PC-9 (cell line): ENCODE measurements at regions of chr11 and their contacts with region 1.

Region 1: GRCh38 chr11:68839054-68839865 is 2.5 kb downstream of the CPT1A start:
- DNase-seq: peak; percentile 88 to 98
- H3K4me3 ChIP-seq: peak overlapping the region; percentile 56
- H3K27ac ChIP-seq: peak overlapping the region; percentile 88
- H3K4me1 ChIP-seq: peaks cover 35% of the 10 kb centered on the region
- H3K27me3 ChIP-seq: no peaks in the 10 kb centered on the region
- CTCF ChIP-seq: no peak

Region 2: DNA sequence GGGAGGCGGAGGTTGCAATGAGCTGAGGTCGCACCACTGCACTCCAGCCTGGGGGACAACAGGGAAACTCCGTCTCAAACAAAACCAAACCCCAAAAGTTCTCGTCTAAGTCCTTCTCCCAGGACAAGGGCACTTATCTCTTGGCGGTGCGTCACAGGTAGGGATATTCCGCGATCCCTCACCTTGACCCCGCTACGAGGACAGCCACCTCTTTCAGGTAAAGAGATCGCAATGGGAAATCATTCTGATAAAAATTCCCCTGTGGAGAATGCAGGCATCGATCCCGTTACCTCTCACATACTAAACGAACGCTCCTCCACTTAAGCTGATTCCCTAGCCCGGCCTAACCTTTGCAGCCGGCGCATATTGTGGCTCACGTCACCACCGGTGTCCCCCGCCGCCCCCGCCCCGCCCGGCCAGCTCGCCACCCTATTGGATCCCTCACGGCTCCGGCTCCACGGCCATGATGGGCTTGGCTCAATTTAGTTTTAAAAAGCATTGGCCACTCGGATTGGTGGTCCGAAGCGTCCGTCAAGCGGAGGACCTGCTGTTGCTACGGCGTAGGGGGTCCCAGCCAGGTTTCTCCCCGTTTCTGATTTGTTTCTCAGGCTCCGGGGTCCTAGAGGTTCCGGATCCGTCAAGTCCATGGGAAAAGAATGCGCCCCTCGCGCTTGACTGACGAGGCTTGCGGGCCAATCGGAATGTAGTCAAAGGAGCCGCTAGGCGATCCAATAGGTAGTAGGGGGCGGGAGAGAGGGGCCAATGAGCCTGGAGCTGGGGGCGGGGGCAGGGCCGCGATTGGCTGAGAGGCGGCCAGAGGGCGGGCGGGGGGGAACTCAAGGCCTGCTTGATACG is 379.1 kb before region 1 on chr11:
- CTCF ChIA-PET with region 1: no interaction called
- POLR2A ChIA-PET with region 1: interaction called, 5 read pairs
- intact Hi-C with region 1: loop called (anchors 2 kb)
- DNase-seq: peak; percentile 95 to 97
- H3K4me3 ChIP-seq: peak overlapping the region; percentile 72
- H3K27ac ChIP-seq: peak overlapping the region; percentile 67
- H3K4me1 ChIP-seq: peaks cover 21% of the 10 kb centered on the region
- H3K27me3 ChIP-seq: no peaks in the 10 kb centered on the region
- CTCF ChIP-seq: no peak

Region 3: DNA sequence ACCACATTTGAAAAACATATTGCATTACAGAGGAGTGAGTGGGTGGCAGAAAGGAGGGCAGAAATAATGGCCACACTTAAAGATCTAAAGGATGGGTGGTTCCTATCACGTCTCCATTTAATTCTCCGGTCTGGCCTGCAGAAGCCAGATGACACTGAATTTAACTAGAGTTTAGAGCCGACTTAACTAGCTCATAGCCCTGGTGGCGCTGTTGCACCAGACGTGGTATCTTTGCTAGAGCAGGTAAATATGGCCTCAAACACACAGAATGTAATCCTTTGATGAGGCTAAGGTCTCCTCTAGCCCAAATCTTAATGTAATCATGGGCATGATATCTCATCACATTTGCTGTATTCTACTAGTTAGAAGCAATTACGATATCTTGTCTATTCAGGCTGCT is 206.5 kb before region 1 on chr11:
- CTCF ChIA-PET with region 1: interaction called, 10 read pairs
- POLR2A ChIA-PET with region 1: no interaction called
- intact Hi-C with region 1: loop called (anchors 5 kb)
- DNase-seq: peak; percentile 63 to 66
- H3K4me3 ChIP-seq: no peak overlapping the region
- H3K27ac ChIP-seq: no peak overlapping the region
- H3K4me1 ChIP-seq: no peaks in the 10 kb centered on the region
- H3K27me3 ChIP-seq: peaks cover 61% of the 10 kb centered on the region
- CTCF ChIP-seq: peak; percentile 87

Region 4: DNA sequence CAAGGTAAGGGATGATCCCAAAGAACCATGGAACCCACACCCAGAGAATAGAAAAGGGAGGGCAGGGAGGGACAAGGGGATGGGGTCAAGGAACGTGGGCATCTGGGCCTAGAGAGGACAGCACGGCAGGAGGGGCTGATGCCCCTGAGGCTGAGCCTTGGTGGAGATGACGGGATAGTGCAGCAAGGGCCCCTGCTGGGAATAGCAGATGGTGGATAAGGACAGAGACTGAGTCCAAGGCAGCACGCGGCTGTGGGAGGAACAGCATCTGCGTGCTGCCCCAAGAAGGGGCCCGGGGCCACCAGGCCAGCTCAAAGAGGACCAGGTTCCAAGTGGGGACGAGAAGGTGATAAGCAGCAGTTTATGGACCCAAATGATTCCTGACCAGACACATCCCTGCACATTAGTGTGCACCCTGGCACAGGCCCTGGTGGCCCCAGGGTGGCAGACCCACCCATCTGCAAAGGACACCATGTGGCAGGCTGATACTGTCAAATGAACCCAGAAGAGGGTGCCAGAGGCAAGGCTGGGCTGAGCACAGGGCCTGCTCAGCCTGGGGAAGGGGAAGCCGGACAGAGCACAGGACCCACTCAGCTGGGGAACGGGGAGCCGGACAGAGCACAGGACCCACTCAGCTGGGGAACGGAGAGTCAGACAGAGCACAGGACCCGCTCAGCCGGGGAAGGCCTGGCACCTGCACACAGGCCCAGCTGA is 75.2 kb before region 1 on chr11:
- CTCF ChIA-PET with region 1: no interaction called
- POLR2A ChIA-PET with region 1: no interaction called
- intact Hi-C with region 1: loop called (anchors 1 kb)
- DNase-seq: no peak
- H3K4me3 ChIP-seq: no peak overlapping the region
- H3K27ac ChIP-seq: peak overlapping the region; percentile 88
- H3K4me1 ChIP-seq: peaks cover 23% of the 10 kb centered on the region
- H3K27me3 ChIP-seq: no peaks in the 10 kb centered on the region
- CTCF ChIP-seq: 0 out of 2 replicates have a peak, but pooled peaks have one; percentile 38

Region 5: DNA sequence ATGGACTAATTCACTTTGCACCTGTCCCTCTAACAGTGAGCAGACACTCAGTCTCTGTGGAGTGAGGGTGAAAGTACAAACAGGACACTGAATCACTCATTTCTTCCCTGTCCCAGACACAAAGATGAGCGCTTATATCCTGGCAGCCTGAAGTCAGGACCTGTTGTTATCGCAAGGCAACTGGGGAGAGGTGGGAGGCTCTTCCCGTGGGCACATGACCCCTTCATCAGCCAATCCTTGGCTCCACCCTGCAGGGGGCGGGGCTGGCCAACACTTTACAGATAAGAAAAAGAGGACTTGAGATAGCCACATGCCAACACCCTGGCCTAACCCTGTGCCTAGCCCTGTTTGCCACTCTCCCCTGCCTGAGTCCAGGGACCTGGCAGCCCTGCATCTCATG is 58.4 kb before region 1 on chr11:
- CTCF ChIA-PET with region 1: no interaction called
- POLR2A ChIA-PET with region 1: no interaction called
- intact Hi-C with region 1: loop called (anchors 1 kb)
- DNase-seq: peak in 1 of 2 experiments; percentile 11
- H3K4me3 ChIP-seq: no peak overlapping the region
- H3K27ac ChIP-seq: no peak overlapping the region
- H3K4me1 ChIP-seq: peaks cover 19% of the 10 kb centered on the region
- H3K27me3 ChIP-seq: no peaks in the 10 kb centered on the region
- CTCF ChIP-seq: no peak

Region 6: GRCh38 chr11:68806921-68807844 is 32.1 kb before region 1 on chr11:
- CTCF ChIA-PET with region 1: interaction called, 12 read pairs
- POLR2A ChIA-PET with region 1: no interaction called
- intact Hi-C with region 1: no loop called
- DNase-seq: no peak
- H3K4me3 ChIP-seq: no peak overlapping the region
- H3K27ac ChIP-seq: no peak overlapping the region
- H3K4me1 ChIP-seq: no peaks in the 10 kb centered on the region
- H3K27me3 ChIP-seq: no peaks in the 10 kb centered on the region
- CTCF ChIP-seq: no peak

Region 7: DNA sequence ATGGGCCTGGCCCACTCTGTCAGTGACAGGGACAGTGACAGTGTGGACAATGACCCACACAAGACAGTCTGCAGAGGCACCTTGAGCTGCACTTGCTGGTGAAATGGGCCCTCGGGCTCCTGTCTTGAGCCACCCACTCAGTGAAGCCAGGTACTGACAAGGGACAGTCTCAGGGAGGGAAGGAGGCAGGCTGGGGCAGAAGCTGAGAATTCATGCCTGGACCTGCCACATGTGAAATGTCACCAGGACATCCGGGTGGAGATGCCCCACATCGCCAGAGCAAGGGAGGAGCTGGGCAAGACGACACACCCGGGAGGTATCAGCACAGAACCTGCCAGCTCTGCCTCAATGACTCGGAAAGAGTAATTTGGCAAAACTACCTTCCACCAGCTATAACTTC is 21.1 kb before region 1 on chr11:
- CTCF ChIA-PET with region 1: no interaction called
- POLR2A ChIA-PET with region 1: no interaction called
- intact Hi-C with region 1: no loop called
- DNase-seq: no peak
- H3K4me3 ChIP-seq: no peak overlapping the region
- H3K27ac ChIP-seq: no peak overlapping the region
- H3K4me1 ChIP-seq: no peaks in the 10 kb centered on the region
- H3K27me3 ChIP-seq: no peaks in the 10 kb centered on the region
- CTCF ChIP-seq: no peak

Region 8: DNA sequence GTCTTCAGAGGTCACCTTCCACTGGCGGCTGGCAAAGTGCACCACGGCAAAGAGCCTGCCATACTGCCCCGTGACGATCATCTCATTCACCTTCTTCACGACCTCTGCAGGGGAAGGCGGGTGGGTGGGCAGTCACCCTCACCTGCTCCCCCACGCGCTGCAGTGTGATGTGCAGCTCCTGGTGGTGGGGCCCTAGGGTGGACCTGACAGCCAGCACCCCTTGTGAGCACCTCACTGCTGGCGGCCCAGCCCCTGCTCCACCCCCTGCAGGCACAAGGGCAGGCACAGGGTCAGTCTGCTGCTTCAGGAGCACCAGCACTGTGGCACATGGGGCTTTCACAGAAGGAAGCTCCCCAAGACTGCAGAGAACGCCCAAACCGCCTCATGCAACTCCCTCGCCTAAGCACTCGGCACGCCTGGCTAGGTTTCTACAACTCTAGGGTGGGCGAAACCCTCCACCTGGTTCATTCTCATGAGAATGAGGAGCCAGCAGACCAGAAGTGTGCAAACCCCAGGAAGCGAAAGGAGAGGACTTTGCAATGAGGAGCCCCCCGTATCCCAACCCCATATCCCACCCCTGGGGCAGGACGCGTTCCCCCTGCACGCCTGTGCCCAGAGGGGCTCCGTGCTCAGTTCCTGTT is 57.4 kb after region 1 on chr11:
- CTCF ChIA-PET with region 1: no interaction called
- POLR2A ChIA-PET with region 1: no interaction called
- intact Hi-C with region 1: no loop called
- DNase-seq: no peak
- H3K4me3 ChIP-seq: no peak overlapping the region
- H3K27ac ChIP-seq: no peak overlapping the region
- H3K4me1 ChIP-seq: no peaks in the 10 kb centered on the region
- H3K27me3 ChIP-seq: no peaks in the 10 kb centered on the region
- CTCF ChIP-seq: no peak

Region 9: GRCh38 chr11:69670158-69670845 is 831.0 kb after region 1 on chr11:
- CTCF ChIA-PET with region 1: no interaction called
- POLR2A ChIA-PET with region 1: no interaction called
- intact Hi-C with region 1: loop called (anchors 5 kb)
- DNase-seq: peak; percentile 65 to 83
- H3K4me3 ChIP-seq: no peak overlapping the region
- H3K27ac ChIP-seq: no peak overlapping the region
- H3K4me1 ChIP-seq: peaks cover 14% of the 10 kb centered on the region
- H3K27me3 ChIP-seq: no peaks in the 10 kb centered on the region
- CTCF ChIP-seq: peak; percentile 97